MCF 10A (cell line): ENCODE measurements at regions of chr9 and their contacts with region 1.

Region 1: DNA sequence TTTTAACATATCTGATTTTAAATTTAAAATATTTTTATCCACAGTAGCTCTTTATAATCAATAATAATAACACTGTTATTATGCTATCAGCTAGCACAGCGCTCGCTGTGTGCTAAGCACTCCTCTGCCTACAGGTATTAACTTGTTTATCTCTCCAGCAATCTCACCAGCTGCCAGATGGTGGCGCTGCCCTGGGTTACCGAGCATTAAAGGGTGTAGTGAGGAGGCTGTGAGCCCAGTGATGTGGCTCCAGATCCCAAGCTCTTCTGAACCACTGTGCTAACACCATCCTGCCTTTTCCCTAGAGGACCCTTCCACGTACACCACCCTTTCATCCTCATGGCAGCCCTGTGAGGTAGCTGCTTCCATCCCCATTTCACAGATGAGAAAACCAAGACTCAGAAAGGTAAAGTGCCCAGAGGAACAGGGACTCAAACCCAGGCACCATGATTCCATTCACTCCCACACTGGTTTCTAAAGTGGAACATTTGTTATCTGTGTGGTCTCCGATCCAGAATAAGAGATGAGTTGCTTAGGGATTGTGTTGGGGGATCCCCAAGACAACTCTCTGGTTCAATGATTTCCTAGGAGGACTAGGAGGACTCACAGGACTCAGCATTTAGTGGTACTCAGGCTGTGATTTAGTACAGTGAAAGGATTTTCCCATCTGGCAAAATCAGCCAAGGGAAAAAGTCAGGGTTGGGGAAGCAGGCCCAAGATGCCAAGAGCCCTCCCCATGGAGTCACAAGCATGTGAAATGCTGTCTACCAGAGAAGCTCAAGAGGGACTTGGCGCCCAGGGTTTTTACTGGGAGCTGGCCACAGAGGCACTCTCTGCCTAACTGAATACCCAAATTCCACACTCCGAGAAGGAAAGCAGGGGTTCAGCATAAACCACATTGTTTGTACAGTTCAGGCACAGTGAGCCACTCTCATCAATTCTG is 7.0 kb downstream of the IGFBPL1 start:
- DNase-seq: peak; percentile 43
- H3K4me3 Mint-ChIP-seq: no peak overlapping the region
- H3K27ac Mint-ChIP-seq: no peak overlapping the region
- H3K4me1 Mint-ChIP-seq: no peaks in the 10 kb centered on the region
- H3K27me3 Mint-ChIP-seq: peaks cover 25% of the 10 kb centered on the region
- CTCF ChIP-seq: peak; percentile 54

Region 2: DNA sequence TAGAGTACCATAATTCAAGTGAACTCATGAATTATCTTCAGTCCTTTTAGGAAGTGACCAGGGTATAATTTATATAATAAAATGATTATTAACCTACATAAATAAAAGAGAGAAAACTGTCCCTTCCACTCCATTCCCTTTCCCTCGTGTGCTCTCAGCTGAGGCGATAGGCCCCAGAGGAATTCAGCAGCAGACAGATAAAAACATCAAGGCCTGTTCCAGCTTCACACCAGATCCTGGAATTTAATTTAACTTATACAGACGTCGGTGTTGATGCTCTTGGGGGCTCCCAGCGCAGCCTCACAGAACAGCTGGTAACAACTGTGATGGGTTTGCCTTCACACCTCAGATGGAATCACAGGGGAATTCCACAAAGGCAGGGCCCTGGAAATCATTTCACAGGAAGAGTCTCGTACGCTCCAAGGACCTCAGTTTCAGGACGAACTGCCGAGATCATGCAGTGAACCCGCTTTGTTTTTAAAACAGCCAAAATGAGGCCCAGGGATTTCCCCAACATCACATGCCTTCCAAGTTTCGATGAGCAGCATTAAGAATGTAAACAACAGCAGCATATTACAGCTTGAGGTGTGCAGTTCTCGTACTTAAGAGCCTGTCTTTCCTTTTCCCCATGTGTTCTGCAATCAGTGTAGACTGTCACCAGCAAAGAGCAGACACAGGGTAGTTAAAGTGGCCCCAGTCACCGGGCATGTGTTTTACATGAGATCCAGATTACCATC is 98.3 kb before region 1 on chr9:
- CTCF ChIA-PET with region 1: no interaction called
- POLR2A ChIA-PET with region 1: no interaction called
- intact Hi-C with region 1: no loop called
- DNase-seq: no peak
- H3K4me3 Mint-ChIP-seq: no peak overlapping the region
- H3K27ac Mint-ChIP-seq: no peak overlapping the region
- H3K4me1 Mint-ChIP-seq: no peaks in the 10 kb centered on the region
- H3K27me3 Mint-ChIP-seq: peaks cover 40% of the 10 kb centered on the region
- CTCF ChIP-seq: no peak

Region 3: GRCh38 chr9:38405785-38406184 is 11.5 kb before region 1 on chr9:
- CTCF ChIA-PET with region 1: interaction called, 18 read pairs
- POLR2A ChIA-PET with region 1: no interaction called
- intact Hi-C with region 1: no loop called
- DNase-seq: no peak
- H3K4me3 Mint-ChIP-seq: no peak overlapping the region
- H3K27ac Mint-ChIP-seq: no peak overlapping the region
- H3K4me1 Mint-ChIP-seq: no peaks in the 10 kb centered on the region
- H3K27me3 Mint-ChIP-seq: peaks cover 51% of the 10 kb centered on the region
- CTCF ChIP-seq: no peak